ENCODE measurements at regions of chr1 and their contacts with region 1.

Region 1: DNA sequence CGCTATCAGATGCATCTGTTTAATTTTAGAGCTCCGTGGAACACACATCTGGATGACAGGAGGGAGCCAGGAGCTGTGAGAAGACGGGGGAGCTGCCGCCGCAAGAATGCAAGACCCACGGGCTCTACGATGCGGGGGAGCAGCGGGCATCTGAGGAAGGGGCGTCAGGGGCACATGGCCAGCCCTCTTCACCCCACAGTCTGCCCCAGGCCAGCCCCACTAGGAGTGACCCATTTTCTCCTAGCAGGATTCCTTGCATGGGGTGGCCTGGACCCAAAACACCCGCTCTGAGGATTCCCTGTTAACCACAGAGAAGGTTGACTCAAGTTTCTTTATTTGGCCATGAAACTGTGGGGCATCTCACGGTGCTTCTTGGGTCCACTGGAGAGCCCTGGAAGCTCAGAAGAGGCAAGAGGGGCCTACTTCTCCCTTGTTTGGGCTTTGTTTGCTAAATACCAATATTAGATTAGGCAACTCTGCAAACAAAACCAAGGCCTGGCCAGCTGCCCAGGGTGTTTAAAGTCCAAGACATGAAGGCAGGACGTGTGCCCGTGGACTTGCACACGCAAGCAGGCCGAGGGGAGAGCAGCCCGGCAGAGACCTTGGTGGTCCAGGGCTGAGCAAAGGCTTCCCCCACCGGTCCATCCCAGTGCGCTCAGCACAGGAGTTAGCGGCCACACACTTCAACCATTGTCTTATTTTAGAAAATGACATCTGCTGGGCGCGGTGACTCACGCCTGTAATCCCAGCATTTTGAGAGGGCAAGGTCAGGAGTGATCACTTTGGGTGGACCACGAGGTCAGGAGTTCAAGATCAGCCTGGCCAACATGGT is 89.8 kb downstream of the DHRS3 start:
- DNase-seq: peak; percentile 70 to 78
- H3K4me3 ChIP-seq: no peak overlapping the region
- H3K4me3 Mint-ChIP-seq: peak overlapping the region; percentile 11
- H3K27ac Mint-ChIP-seq: no peak overlapping the region
- H3K4me1 ChIP-seq: peaks cover 30% of the 10 kb centered on the region
- H3K4me1 Mint-ChIP-seq: peaks cover 29% of the 10 kb centered on the region
- H3K27me3 ChIP-seq: no peaks in the 10 kb centered on the region
- H3K27me3 Mint-ChIP-seq: no peaks in the 10 kb centered on the region
- CTCF ChIP-seq: no peak

Region 2: DNA sequence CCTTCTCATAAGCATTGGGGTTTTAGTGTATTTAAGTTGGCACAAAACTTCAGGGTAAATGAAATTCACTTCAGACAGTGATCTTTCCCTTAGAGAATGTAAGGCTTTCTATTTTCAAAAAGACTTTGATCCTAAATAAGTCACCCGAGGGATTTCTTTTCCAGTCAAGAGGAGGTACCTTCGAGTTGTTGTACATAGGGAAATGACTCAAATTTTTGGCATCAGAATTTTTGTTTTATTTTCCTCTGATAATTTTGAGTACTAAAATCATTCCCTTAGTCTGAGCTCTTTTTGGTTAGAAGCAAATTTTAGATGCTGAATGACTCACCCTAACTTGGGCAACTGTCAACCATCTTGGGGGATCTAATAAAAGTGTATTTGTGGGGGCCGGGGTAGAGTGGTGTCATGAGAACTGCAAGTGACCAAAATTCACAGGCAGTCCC is 104.1 kb before region 1 on chr1:
- CTCF ChIA-PET with region 1: no interaction called
- POLR2A ChIA-PET with region 1: no interaction called
- intact Hi-C with region 1: no loop called
- DNase-seq: no peak
- H3K4me3 ChIP-seq: no peak overlapping the region
- H3K4me3 Mint-ChIP-seq: no peak overlapping the region
- H3K27ac Mint-ChIP-seq: no peak overlapping the region
- H3K4me1 ChIP-seq: 0 out of 2 replicates have a peak, but pooled peaks cover 7% of the 10 kb centered on the region
- H3K4me1 Mint-ChIP-seq: peaks cover 7% of the 10 kb centered on the region
- H3K27me3 ChIP-seq: no peaks in the 10 kb centered on the region
- H3K27me3 Mint-ChIP-seq: no peaks in the 10 kb centered on the region
- CTCF ChIP-seq: no peak

Region 3: GRCh38 chr1:12486401-12487005 is 41.7 kb before region 1 on chr1:
- CTCF ChIA-PET with region 1: no interaction called
- POLR2A ChIA-PET with region 1: no interaction called
- intact Hi-C with region 1: no loop called
- DNase-seq: peak in 1 of 2 experiments; percentile 49
- H3K4me3 ChIP-seq: no peak overlapping the region
- H3K4me3 Mint-ChIP-seq: no peak overlapping the region
- H3K27ac Mint-ChIP-seq: peak overlapping the region; percentile 61
- H3K4me1 ChIP-seq: peaks cover 35% of the 10 kb centered on the region
- H3K4me1 Mint-ChIP-seq: peaks cover 28% of the 10 kb centered on the region
- H3K27me3 ChIP-seq: no peaks in the 10 kb centered on the region
- H3K27me3 Mint-ChIP-seq: no peaks in the 10 kb centered on the region
- CTCF ChIP-seq: no peak

Region 4: GRCh38 chr1:12556368-12556930 is 28.2 kb after region 1 on chr1:
- CTCF ChIA-PET with region 1: no interaction called
- POLR2A ChIA-PET with region 1: no interaction called
- intact Hi-C with region 1: loop called (anchors 1 kb)
- DNase-seq: peak; percentile 33 to 45
- H3K4me3 ChIP-seq: no peak overlapping the region
- H3K4me3 Mint-ChIP-seq: no peak overlapping the region
- H3K27ac Mint-ChIP-seq: peak overlapping the region; percentile 82
- H3K4me1 ChIP-seq: peaks cover 4% of the 10 kb centered on the region; the same call in 1 of the 2 replicates
- H3K4me1 Mint-ChIP-seq: peaks cover 7% of the 10 kb centered on the region
- H3K27me3 ChIP-seq: no peaks in the 10 kb centered on the region
- H3K27me3 Mint-ChIP-seq: no peaks in the 10 kb centered on the region
- CTCF ChIP-seq: no peak

Region 5: DNA sequence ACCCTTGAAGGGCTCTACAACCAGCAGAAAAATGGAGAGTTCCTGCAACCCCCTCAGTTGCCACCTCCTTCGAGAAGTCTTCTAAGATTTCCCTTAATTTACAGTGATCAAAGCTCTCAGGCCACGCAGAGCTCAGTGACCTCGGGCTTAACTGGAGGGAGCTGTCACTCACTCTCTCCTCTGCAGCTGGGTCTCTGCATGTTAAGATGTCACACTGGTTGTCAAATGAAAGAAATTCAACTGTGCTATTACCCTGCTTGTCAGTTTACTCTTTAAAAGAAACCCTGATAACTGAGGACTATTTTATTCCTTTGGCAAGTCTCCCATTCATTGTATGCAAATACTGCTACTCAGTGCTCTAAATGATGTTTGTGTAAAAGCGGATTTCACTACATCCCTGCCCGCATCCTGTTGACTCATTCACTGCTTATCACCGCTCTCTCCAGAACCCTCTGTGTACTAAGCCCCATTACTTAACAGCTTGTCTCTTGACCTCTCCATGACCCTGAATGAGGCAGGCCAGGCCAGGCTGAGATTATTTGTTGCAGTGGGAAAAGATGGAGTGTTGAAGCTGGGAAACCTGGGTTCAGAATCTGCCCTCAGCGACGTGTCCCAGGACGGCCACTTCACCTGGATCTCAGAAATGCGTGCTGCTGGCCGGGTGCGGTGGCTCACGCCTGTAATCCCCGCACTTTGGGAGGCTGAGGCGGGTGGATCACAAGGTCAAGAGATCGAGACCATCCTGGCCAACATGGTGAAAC is 76.1 kb after region 1 on chr1:
- CTCF ChIA-PET with region 1: no interaction called
- POLR2A ChIA-PET with region 1: no interaction called
- intact Hi-C with region 1: loop called (anchors 2 kb)
- DNase-seq: peak; percentile 72 to 78
- H3K4me3 ChIP-seq: no peak overlapping the region
- H3K4me3 Mint-ChIP-seq: peak overlapping the region; percentile 37
- H3K27ac Mint-ChIP-seq: peak overlapping the region; percentile 59
- H3K4me1 ChIP-seq: peaks cover 52% of the 10 kb centered on the region
- H3K4me1 Mint-ChIP-seq: peaks cover 23% of the 10 kb centered on the region
- H3K27me3 ChIP-seq: no peaks in the 10 kb centered on the region
- H3K27me3 Mint-ChIP-seq: no peaks in the 10 kb centered on the region
- CTCF ChIP-seq: no peak

Measured in Caco-2 (cell line).